Endothelial cell of umbilical vein (primary cell): ENCODE measurements at regions of chr14 and their contacts with region 1.

Region 1: GRCh38 chr14:99793213-99794150 is at the start of gene EML1:
- DNase-seq: peak; percentile 64
- H3K4me3 ChIP-seq: peak within 1 kb of the TSS; percentile 35 to 91 (median 65)
- H3K27ac ChIP-seq: peak within 1 kb of the TSS; percentile 15
- H3K4me1 ChIP-seq: peaks cover 20% of the 10 kb centered on the region
- H3K27me3 ChIP-seq: no peaks in the 10 kb centered on the region
- CTCF ChIP-seq: no peak
- POLR2A ChIP-seq: peak; percentile 56
- total RNA-seq, gene EML1: 33.0 and 47.8 TPM in 2 replicates

Region 2: GRCh38 chr14:99628832-99629618 is 164.5 kb before region 1 on chr14:
- CTCF ChIA-PET with region 1: no interaction called
- POLR2A ChIA-PET with region 1: no interaction called
- dilution Hi-C with region 1: no loop called
- intact Hi-C with region 1: no loop called
- DNase-seq: peak; percentile 69
- H3K4me3 ChIP-seq: no peak overlapping the region
- H3K27ac ChIP-seq: no peak overlapping the region
- H3K4me1 ChIP-seq: no peaks in the 10 kb centered on the region
- H3K27me3 ChIP-seq: no peaks in the 10 kb centered on the region
- CTCF ChIP-seq: peak; percentile 97 to 99
- POLR2A ChIP-seq: no peak

Region 3: GRCh38 chr14:99737451-99737951 is 56.0 kb before region 1 on chr14:
- CTCF ChIA-PET with region 1: interaction called, 11 read pairs
- POLR2A ChIA-PET with region 1: no interaction called
- dilution Hi-C with region 1: no loop called
- intact Hi-C with region 1: no loop called
- DNase-seq: peak; percentile 79
- H3K4me3 ChIP-seq: peak overlapping the region; percentile 39 to 57 (median 55)
- H3K27ac ChIP-seq: peak overlapping the region; percentile 81
- H3K4me1 ChIP-seq: peaks cover 39% of the 10 kb centered on the region
- H3K27me3 ChIP-seq: no peaks in the 10 kb centered on the region
- CTCF ChIP-seq: no peak
- POLR2A ChIP-seq: peak; percentile 53

Region 4: DNA sequence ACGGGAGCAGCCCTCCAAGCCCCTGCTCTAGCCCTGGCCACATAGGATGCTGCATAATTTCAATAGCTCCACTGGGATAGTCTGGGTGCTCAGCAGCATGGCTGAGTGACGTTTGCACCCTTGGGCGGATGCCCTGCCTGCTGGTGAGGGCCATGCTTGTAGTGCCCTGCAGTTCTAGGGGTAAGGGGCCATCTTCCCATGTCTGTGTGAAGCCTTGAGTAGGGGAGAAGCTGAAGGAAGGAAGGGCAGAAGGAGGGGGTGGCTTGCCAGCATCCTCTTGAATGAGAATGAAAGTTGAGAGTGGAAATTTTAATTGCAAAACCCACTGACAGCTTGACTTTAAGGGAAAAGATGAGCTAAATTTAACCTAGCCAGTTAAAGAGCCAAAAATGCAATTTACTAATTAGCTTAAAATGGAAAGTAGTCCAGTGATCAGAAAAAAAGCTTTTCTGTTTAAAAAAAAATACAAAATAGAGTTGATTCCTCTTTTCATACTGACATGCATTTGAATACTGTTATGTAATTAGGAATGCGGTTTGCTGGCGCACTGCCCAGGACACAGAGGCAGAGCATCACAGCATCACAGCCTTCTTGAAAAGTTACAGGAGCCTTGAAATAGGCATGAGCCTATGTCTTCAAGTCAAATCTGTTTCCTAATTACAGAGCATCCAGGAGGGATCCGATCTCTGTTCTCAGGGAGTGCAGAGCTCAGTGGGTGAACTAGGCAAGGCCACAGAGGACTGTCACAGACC is 18.8 kb before region 1 on chr14:
- CTCF ChIA-PET with region 1: interaction called, 10 read pairs
- POLR2A ChIA-PET with region 1: no interaction called
- dilution Hi-C with region 1: no loop called
- intact Hi-C with region 1: no loop called
- DNase-seq: no peak
- H3K4me3 ChIP-seq: no peak overlapping the region
- H3K27ac ChIP-seq: no peak overlapping the region
- H3K4me1 ChIP-seq: no peaks in the 10 kb centered on the region
- H3K27me3 ChIP-seq: no peaks in the 10 kb centered on the region
- CTCF ChIP-seq: no peak
- POLR2A ChIP-seq: no peak